CD8-positive, alpha-beta T cell (primary cell): ENCODE measurements at regions of chr2 and their contacts with region 1.

Region 1: DNA sequence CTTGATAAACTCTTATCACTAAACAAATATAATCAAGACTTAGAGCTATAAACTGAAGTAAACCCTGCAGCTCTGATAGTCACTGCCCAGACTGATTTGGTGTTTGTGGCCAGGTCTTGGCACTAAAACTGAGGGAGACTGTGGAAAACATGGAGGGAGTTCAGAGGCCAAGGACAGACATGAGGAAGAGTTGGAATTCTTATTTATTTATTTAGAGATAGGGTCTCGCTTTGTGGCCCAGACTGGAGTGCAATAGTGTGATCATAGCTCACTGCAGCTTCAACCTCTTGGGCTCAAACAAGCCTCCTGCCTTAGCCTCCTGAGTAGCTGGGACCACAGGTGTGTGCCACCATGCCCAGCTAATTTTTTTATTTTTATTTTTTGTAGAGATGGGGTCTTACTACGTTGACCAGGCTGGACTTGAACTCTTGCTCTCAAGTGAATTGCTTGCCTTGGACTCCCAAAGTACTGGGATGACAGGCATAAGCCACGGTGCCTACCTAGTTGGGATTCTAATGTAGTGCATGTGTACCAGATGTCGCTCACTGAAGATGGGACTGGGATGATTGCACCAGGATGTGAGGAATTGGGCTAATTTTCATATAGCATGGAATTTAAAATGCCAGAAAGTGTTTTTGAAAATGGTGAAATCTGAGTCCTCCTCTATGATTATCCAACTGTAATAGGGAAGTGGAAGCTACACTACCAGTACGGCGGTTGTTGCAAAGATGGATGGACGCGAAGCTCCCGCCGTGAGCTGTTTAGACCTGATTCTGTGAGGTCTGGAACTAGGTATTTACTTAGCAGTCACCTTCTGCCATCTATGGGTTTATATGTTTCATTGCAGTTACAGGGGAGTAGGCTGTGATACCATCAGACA is 52.7 kb upstream of the CTLA4 start:
- DNase-seq: peak; percentile 13 to 84 (median 50)
- ATAC-seq: peak; percentile 80
- H3K4me3 ChIP-seq: no peak overlapping the region
- H3K4me3 Mint-ChIP-seq: peak overlapping the region; percentile 79
- H3K27ac ChIP-seq: no peak overlapping the region
- H3K27ac Mint-ChIP-seq: no peak overlapping the region
- H3K4me1 ChIP-seq: peaks cover 23% of the 10 kb centered on the region
- H3K4me1 Mint-ChIP-seq: peaks cover 43% of the 10 kb centered on the region
- H3K27me3 ChIP-seq: no peaks in the 10 kb centered on the region
- H3K27me3 Mint-ChIP-seq: no peaks in the 10 kb centered on the region
- CTCF ChIP-seq: peak; percentile 79

Region 2: GRCh38 chr2:203225423-203226039 is 589.4 kb before region 1 on chr2:
- CTCF ChIA-PET with region 1: interaction called, 8 read pairs
- POLR2A ChIA-PET with region 1: no interaction called
- intact Hi-C with region 1: loop called (anchors 2 kb)
- DNase-seq: peak in 7 of 9 experiments; percentile 13 to 64 (median 33)
- ATAC-seq: peak; percentile 87
- H3K4me3 ChIP-seq: no peak overlapping the region
- H3K4me3 Mint-ChIP-seq: no peak overlapping the region
- H3K27ac ChIP-seq: no peak overlapping the region
- H3K27ac Mint-ChIP-seq: no peak overlapping the region
- H3K4me1 ChIP-seq: no peaks in the 10 kb centered on the region
- H3K4me1 Mint-ChIP-seq: no peaks in the 10 kb centered on the region
- H3K27me3 ChIP-seq: no peaks in the 10 kb centered on the region
- H3K27me3 Mint-ChIP-seq: no peaks in the 10 kb centered on the region
- CTCF ChIP-seq: peak; percentile 71

Region 3: GRCh38 chr2:203476881-203477280 is 338.0 kb before region 1 on chr2:
- CTCF ChIA-PET with region 1: interaction called, 51 read pairs
- POLR2A ChIA-PET with region 1: no interaction called
- intact Hi-C with region 1: no loop called
- DNase-seq: no peak
- ATAC-seq: no peak
- H3K4me3 ChIP-seq: no peak overlapping the region
- H3K4me3 Mint-ChIP-seq: no peak overlapping the region
- H3K27ac ChIP-seq: no peak overlapping the region
- H3K27ac Mint-ChIP-seq: no peak overlapping the region
- H3K4me1 ChIP-seq: no peaks in the 10 kb centered on the region
- H3K4me1 Mint-ChIP-seq: no peaks in the 10 kb centered on the region
- H3K27me3 ChIP-seq: no peaks in the 10 kb centered on the region
- H3K27me3 Mint-ChIP-seq: no peaks in the 10 kb centered on the region
- CTCF ChIP-seq: no peak

Region 4: DNA sequence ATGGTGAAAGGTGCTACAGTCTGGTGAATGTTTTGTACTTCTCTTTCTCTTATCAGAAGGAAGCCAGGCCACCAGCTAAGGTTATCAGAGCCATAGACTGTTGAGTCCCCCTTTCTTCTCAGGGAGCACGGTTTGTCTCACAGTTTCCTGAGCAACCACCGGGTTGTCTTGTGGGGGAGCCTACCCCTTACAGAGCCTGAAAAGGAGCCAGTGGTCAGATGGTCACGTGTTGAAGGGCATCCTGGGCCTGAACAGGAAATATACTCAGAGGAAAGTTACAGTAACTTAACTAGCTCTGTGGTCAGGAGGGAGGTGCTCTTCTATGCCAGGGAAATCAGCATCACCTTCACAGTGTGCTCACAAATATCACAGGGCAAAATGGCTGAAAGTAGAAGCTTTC is 96.8 kb before region 1 on chr2:
- CTCF ChIA-PET with region 1: interaction called, 27 read pairs
- POLR2A ChIA-PET with region 1: interaction called, 5 read pairs
- intact Hi-C with region 1: no loop called
- DNase-seq: peak in 7 of 9 experiments; percentile 42 to 83 (median 68)
- ATAC-seq: peak; percentile 42
- H3K4me3 ChIP-seq: peak overlapping the region in 1 of 2 experiments; percentile 10
- H3K4me3 Mint-ChIP-seq: peak overlapping the region; percentile 59
- H3K27ac ChIP-seq: peak overlapping the region; percentile 39 to 57
- H3K27ac Mint-ChIP-seq: peak overlapping the region; percentile 95
- H3K4me1 ChIP-seq: peaks cover 98% of the 10 kb centered on the region
- H3K4me1 Mint-ChIP-seq: peaks cover 98% of the 10 kb centered on the region
- H3K27me3 ChIP-seq: no peaks in the 10 kb centered on the region
- H3K27me3 Mint-ChIP-seq: no peaks in the 10 kb centered on the region
- CTCF ChIP-seq: no peak

Region 5: DNA sequence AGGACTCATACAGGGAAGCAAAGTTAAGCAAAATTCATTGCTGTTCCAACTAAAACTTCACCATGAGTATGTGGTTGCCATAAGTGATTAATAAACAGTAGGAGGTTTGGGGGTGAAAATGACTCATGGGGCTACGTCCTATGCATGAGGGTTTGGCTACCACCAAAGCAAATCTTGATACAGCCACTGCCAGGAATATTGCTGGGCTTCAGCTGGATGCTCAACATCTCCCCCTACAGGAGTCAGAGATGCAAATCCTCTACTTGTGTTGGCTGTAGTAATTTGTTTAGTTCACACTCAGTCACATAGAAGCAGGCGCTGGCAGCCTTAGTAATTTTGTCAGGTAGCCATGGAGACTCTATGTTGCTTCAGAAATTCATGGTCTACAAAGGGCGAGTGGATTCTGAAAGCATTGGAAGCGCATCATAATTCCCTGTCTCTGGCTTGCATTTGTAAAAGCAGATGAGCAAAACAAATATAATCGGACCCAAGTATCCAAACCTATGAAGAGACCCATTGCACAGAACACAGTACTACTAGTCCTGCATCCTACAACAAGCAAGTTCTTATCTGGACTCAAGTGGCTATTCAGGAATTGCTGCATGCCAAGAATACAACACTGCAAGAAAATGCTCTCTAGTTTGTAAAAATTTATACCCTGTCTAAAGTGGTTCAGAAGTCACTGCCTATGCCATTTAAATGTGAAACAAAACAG is 32.5 kb before region 1 on chr2:
- CTCF ChIA-PET with region 1: interaction called, 8 read pairs
- POLR2A ChIA-PET with region 1: no interaction called
- intact Hi-C with region 1: loop called in 1 of 2 experiments (anchors 2 kb)
- DNase-seq: peak; percentile 28 to 87 (median 63)
- ATAC-seq: peak; percentile 91
- H3K4me3 ChIP-seq: no peak overlapping the region
- H3K4me3 Mint-ChIP-seq: no peak overlapping the region
- H3K27ac ChIP-seq: no peak overlapping the region
- H3K27ac Mint-ChIP-seq: peak overlapping the region; percentile 87
- H3K4me1 ChIP-seq: peaks cover 24% of the 10 kb centered on the region
- H3K4me1 Mint-ChIP-seq: peaks cover 44% of the 10 kb centered on the region
- H3K27me3 ChIP-seq: no peaks in the 10 kb centered on the region
- H3K27me3 Mint-ChIP-seq: no peaks in the 10 kb centered on the region
- CTCF ChIP-seq: peak; percentile 69